Naive thymus-derived CD4-positive, alpha-beta T cell (primary cell): ENCODE measurements at regions of chr1 and their contacts with region 1.

Region 1: DNA sequence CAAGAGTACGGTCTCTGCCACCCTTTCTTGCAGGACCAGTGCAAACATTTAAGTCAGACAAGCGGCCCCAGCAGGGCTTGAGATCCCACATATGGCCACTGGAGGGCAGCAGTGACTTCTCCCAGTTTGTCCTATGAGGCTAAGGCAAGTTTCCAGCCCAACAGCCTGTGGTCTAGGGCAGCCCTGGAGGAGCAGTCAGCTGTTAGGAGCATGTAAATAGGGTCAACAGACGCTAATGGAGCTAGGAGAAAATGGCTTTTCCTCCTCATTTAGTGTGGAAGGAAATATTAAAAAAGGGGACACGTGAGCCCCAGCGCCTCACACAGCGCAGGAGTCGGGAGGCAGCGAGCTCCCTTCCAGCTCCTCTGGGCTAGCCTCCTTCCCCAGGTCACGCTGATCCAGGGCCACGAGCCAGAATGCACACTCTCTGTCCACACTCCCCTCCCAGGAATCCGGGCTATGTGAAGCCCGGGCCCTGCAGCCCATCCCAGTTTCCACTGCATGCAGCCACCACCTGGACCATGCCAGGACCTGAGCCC is 95.6 kb downstream of the LAMC2 start:
- DNase-seq: peak; percentile 42 to 69 (median 49)
- ATAC-seq: peak; percentile 73
- H3K4me3 ChIP-seq: no peak overlapping the region
- H3K4me3 Mint-ChIP-seq: no peak overlapping the region
- H3K27ac ChIP-seq: no peak overlapping the region
- H3K27ac Mint-ChIP-seq: peak overlapping the region in 1 of 9 donors; percentile 60
- H3K4me1 ChIP-seq: no peaks in the 10 kb centered on the region
- H3K4me1 Mint-ChIP-seq: peaks cover 0 to 14% (median 3%) of the 10 kb centered on the region in 7 donors
- H3K27me3 ChIP-seq: no peaks in the 10 kb centered on the region
- H3K27me3 Mint-ChIP-seq: peaks cover 0 to 10% (median 5%) of the 10 kb centered on the region in 5 donors

Region 2: GRCh38 chr1:183432548-183432875 is 150.9 kb after region 1 on chr1:
- CTCF ChIA-PET with region 1: no interaction called
- POLR2A ChIA-PET with region 1: no interaction called
- intact Hi-C with region 1: no loop called
- DNase-seq: no peak
- ATAC-seq: no peak
- H3K4me3 ChIP-seq: no peak overlapping the region
- H3K4me3 Mint-ChIP-seq: no peak overlapping the region
- H3K27ac ChIP-seq: no peak overlapping the region
- H3K27ac Mint-ChIP-seq: no peak overlapping the region
- H3K4me1 ChIP-seq: no peaks in the 10 kb centered on the region
- H3K4me1 Mint-ChIP-seq: no peaks in the 10 kb centered on the region
- H3K27me3 ChIP-seq: no peaks in the 10 kb centered on the region
- H3K27me3 Mint-ChIP-seq: peaks cover 24 to 46% (median 34%) of the 10 kb centered on the region in 5 donors

Region 3: GRCh38 chr1:183622884-183623785 is 341.5 kb after region 1 on chr1:
- CTCF ChIA-PET with region 1: no interaction called
- POLR2A ChIA-PET with region 1: no interaction called
- intact Hi-C with region 1: loop called in 1 of 2 experiments (anchors 1 kb)
- DNase-seq: peak in 7 of 9 donors; percentile 38 to 67 (median 43)
- ATAC-seq: peak; percentile 96
- H3K4me3 ChIP-seq: no peak overlapping the region
- H3K4me3 Mint-ChIP-seq: no peak overlapping the region
- H3K27ac ChIP-seq: peak overlapping the region; percentile 37
- H3K27ac Mint-ChIP-seq: peak overlapping the region; percentile 1 to 76 (median 58)
- H3K4me1 ChIP-seq: peaks cover 0 to 5% of the 10 kb centered on the region in 2 donors
- H3K4me1 Mint-ChIP-seq: peaks cover 10 to 48% (median 20%) of the 10 kb centered on the region in 7 donors
- H3K27me3 ChIP-seq: no peaks in the 10 kb centered on the region
- H3K27me3 Mint-ChIP-seq: no peaks in the 10 kb centered on the region

Region 4: DNA sequence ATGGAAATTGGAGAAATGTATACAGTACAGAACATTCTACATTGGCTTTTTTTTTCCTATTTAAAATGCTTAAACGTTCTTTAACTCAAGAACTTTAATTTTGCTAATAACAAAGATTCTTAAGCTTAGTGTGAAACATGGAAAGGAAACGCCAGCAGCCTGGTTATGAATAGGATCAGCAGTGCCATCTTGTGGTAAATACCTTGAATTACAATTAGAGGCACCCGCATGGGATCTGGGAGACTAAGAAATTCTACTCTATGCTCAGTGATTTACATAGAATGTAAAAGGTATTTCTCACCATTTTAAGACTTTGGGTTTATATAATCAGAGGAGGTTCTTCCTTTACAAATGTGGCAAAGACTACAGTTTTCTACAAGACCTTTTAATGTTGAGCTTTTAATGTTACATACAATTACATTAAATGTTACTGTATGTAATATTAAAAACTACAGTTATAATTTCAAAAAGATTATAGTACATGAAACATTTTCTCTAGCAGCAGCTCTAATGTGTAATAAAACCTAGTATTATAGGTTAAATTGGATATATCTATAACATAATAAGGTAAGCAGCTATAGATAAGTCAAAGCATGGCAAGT is 403.6 kb after region 1 on chr1:
- CTCF ChIA-PET with region 1: interaction called, 3 read pairs
- POLR2A ChIA-PET with region 1: no interaction called
- intact Hi-C with region 1: loop called in 1 of 2 experiments (anchors 1 kb)
- DNase-seq: peak in 7 of 9 donors; percentile 20 to 63 (median 54)
- ATAC-seq: peak; percentile 86
- H3K4me3 ChIP-seq: no peak overlapping the region
- H3K4me3 Mint-ChIP-seq: no peak overlapping the region
- H3K27ac ChIP-seq: no peak overlapping the region
- H3K27ac Mint-ChIP-seq: no peak overlapping the region
- H3K4me1 ChIP-seq: no peaks in the 10 kb centered on the region
- H3K4me1 Mint-ChIP-seq: peaks cover 0 to 4% (median 0%) of the 10 kb centered on the region in 7 donors
- H3K27me3 ChIP-seq: no peaks in the 10 kb centered on the region
- H3K27me3 Mint-ChIP-seq: peaks cover 0 to 30% (median 0%) of the 10 kb centered on the region in 5 donors